ENCODE measurements at regions of chr17 and their contacts with region 1.

Region 1: DNA sequence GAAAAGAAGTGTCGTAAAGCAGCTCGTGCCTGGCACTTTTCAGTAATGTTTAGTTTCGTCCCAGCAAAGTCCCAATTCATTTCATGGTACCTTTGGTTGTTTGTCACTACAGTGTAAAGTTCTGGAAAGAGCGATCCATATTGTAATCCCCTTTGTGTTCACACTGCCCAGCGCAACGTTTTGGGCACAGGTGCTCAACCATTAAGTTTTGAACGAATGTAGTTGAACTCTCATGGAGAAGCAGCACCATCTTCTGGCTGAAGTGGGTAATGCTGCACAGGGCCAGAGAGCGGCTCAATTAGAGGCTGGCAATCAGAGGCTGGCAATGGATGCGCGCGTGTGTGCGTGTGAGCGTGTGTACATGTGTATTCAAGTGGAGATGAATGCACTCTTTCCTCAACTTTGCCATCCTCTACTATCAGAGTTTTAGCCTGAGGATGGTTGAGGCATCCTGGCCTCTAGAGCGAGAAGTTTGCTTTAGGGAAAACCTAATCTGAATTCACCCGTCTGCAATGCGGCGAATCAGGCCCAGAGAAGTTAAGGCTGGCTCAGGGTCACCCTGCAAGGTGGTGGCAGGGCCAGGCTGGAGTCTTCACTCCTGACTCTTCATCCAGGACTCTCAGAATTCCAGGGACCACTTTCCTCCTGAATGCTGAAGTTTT is 29.9 kb downstream of the DYNLL2 start:
- DNase-seq: no peak
- H3K4me3 ChIP-seq: no peak overlapping the region
- H3K27ac ChIP-seq: no peak overlapping the region
- H3K4me1 ChIP-seq: no peaks in the 10 kb centered on the region
- H3K27me3 ChIP-seq: peaks cover 0 to 27% (median 0%) of the 10 kb centered on the region in 4 donors
- CTCF ChIP-seq: peak; percentile 83 to 97 (median 93)
- POLR2A ChIP-seq: no peak

Region 2: DNA sequence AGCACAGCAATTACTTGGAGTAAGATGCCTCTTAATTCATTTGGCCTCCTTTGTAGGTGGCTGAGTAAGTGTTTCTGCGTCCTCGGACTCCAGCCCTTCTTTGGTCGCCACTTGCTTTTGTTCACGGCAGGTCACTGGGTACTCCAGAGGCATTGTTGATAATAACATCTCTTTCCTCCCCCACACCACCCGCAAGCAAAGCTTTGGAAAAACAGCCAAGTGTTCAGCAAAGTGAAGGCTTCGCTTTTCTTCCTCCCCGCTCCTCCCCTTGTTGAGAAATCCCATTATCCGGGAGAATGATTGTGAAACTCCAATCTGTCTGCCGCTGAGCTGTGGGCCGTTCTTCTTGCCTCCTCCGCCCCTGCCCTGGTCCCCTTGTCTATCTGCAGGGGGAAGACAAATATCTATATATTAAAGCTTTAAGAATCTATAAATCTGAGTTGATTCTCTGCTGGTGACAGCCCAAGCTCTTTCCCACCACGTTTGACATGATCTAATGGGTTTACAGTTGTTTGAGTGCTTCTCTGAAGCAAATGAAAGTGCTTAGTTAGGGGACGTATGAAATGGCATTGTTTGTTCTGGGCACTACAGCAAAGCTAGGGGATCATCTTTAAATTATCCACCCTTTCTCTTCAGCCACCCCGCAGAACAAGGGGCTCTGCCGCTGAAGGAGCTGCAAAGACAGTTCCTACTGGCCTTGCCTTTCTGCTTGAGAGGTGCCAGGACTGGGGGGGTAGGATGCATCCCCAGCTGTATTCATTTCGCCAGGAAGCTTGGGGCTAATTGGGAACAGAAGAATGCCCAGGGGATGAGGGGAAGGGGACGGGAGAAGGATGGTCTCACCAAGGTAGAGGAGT is 535.1 kb before region 1 on chr17:
- intact Hi-C with region 1: no loop called
- DNase-seq: no peak
- H3K4me3 ChIP-seq: peak overlapping the region in 3 of 4 donors; percentile 1 to 55 (median 19)
- H3K27ac ChIP-seq: peak overlapping the region in 3 of 4 donors; percentile 53 to 76 (median 62)
- H3K4me1 ChIP-seq: peaks cover 0 to 31% (median 9%) of the 10 kb centered on the region in 3 donors
- H3K27me3 ChIP-seq: no peaks in the 10 kb centered on the region
- CTCF ChIP-seq: no peak
- POLR2A ChIP-seq: no peak

Region 3: DNA sequence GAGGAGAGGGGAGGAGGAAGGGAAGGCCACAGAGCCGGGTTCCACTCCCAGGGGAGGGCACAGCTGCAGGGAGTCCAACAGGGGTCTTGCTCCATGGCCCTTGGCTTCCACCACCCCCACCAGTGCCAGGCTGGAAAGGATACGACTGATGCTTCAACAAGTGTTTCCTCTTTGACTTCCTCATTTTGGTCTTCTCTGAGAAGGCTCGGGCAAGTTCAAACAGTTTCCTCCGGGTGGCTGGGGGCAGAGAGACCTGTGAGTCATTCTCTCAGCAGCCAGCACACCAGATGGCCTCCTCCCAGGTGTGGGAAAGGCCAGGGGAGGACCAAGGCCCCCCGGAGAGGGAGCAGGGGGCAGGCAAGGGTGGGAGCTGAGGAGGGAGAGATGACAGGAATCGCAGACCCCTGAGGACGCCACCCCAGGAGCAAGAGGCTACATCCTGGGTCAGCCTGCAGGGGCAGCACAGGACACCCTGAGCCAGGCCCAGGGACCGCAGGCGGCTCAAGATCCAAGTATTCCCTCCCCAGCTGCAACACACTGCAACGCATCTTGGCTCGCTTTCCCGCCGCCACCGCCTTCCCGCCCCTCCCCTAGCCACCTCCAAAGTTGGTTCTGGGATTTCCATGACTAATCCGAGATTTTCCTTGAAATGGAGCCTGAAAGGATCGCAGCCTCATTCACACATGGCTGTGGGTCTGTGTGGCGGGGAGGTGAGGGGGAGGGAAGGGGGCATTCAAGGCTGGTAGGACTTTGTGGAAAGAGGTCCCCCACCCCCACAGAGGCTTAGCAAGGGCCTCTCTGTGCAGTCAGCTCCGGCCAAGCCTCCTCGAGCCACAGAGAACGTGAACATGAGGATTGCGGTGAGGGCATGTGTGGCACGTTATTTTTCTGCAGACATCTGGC is 244.8 kb before region 1 on chr17:
- intact Hi-C with region 1: loop called (anchors 10 kb)
- DNase-seq: peak; percentile 32
- H3K4me3 ChIP-seq: peak overlapping the region in 1 of 4 donors; percentile 10
- H3K27ac ChIP-seq: peak overlapping the region; percentile 73 to 90 (median 84)
- H3K4me1 ChIP-seq: peaks cover 35 to 63% (median 41%) of the 10 kb centered on the region in 3 donors
- H3K27me3 ChIP-seq: no peaks in the 10 kb centered on the region
- CTCF ChIP-seq: peak in 4 of 6 experiments; percentile 27 to 47 (median 39)
- POLR2A ChIP-seq: no peak

Region 4: GRCh38 chr17:58006924-58007780 is 105.9 kb before region 1 on chr17 and contains the start of gene SRSF1:
- intact Hi-C with region 1: loop called (anchors 5 kb)
- DNase-seq: peak; percentile 85
- H3K4me3 ChIP-seq: peak within 1 kb of the TSS; percentile 76 to 100 (median 92)
- H3K27ac ChIP-seq: peak within 1 kb of the TSS; percentile 96 to 100 (median 99)
- H3K4me1 ChIP-seq: peaks cover 15 to 52% (median 34%) of the 10 kb centered on the region in 3 donors
- H3K27me3 ChIP-seq: no peaks in the 10 kb centered on the region
- CTCF ChIP-seq: no peak
- POLR2A ChIP-seq: peak in 3 of 4 donors; percentile 87 to 95 (median 93)
- total RNA-seq, gene SRSF1: 134 to 223 (median 200) TPM

Measured in esophagus squamous epithelium (tissue), 5 donors.